ENCODE measurements at regions of chr3 and their contacts with region 1.

Region 1: DNA sequence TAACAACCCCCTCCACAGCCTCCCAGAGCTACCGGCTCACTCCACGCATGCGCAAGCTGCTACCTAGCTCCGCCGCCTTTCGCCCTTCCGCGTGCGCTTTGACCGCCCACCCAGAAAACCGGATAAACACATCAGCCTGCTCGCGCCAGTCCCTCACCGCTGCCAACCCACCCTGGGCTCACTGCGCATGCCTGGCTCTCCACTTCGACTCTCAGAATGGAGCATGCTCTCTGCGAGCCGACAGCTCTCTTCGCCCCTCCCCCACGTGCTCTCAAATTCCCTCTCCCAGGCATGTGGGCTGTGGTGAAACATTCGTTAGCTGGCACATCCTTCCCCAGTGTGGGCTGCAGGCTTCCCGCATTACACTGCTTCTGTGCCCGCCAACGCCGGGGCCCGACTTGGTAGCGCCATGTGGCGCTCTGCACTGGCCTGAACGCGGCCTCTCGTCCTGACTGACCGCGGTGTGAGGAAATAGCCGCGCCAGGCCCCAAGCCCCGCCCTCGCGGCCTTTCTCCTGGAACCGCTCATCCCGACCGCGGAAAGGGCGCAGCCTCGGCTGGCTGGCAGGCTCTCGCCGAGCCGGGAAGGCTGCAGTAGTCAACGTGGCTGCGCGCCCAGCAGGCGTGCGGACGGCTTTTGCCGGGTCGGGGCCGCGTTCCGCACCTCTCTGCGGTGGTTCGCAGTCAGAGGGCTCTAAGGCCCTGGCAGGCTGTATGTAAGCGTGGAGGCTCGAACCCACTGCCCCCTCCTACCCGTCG is 445 bp upstream of the MSL2 start:
- DNase-seq: peak; percentile 98
- H3K4me3 ChIP-seq: peak overlapping the region; percentile 93 to 94
- H3K27ac ChIP-seq: peak overlapping the region; percentile 99 to 100
- H3K4me1 ChIP-seq: peaks cover 16% of the 10 kb centered on the region
- H3K27me3 ChIP-seq: no peaks in the 10 kb centered on the region
- CTCF ChIP-seq: no peak
- POLR2A ChIP-seq: no peak

Region 2: GRCh38 chr3:136055491-136055890 is 141.1 kb before region 1 on chr3:
- intact Hi-C with region 1: no loop called
- DNase-seq: no peak
- H3K4me3 ChIP-seq: no peak overlapping the region
- H3K27ac ChIP-seq: no peak overlapping the region
- H3K4me1 ChIP-seq: no peaks in the 10 kb centered on the region
- H3K27me3 ChIP-seq: no peaks in the 10 kb centered on the region
- CTCF ChIP-seq: no peak
- POLR2A ChIP-seq: no peak

Region 3: GRCh38 chr3:136075218-136075808 is 121.3 kb before region 1 on chr3:
- intact Hi-C with region 1: loop called (anchors 10 kb)
- DNase-seq: peak; percentile 86
- H3K4me3 ChIP-seq: no peak overlapping the region
- H3K27ac ChIP-seq: no peak overlapping the region
- H3K4me1 ChIP-seq: peaks cover 16% of the 10 kb centered on the region
- H3K27me3 ChIP-seq: no peaks in the 10 kb centered on the region
- CTCF ChIP-seq: peak; percentile 92 to 97 (median 96)
- POLR2A ChIP-seq: no peak

Region 4: DNA sequence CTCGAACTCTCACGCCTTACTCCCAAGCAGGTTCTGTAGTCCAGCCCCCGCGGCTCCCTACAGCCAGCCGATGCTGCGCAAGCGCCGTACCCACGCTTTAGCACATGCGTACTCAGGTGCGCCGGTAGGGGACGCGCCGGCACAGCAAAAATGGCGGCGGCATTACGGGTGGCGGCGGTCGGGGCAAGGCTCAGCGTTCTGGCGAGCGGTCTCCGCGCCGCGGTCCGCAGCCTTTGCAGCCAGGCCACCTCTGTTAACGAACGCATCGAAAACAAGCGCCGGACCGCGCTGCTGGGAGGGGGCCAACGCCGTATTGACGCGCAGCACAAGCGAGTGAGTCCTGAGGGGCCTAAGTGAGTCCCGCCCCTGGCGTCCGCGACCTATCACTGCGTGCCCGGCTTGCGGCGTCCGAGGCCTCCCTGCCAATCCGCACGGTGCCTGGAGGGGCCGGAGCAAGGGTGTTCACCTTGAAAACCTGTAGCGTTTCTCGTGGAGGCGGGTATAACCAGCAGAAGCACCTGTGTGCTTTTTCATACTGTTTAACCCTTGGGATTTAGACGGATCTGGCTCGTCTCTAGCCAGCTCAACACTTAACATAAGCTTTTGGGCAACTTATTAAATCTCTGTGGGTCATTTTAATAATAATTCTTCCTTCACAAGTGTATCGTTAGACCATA is 53.8 kb after region 1 on chr3 and contains the start of gene PCCB:
- intact Hi-C with region 1: loop called (anchors 5 kb)
- DNase-seq: peak; percentile 95
- H3K4me3 ChIP-seq: peak within 1 kb of the TSS; percentile 69 to 73
- H3K27ac ChIP-seq: peak within 1 kb of the TSS; percentile 91 to 95
- H3K4me1 ChIP-seq: peaks cover 17% of the 10 kb centered on the region
- H3K27me3 ChIP-seq: no peaks in the 10 kb centered on the region
- CTCF ChIP-seq: peak; percentile 11 to 92 (median 89)
- POLR2A ChIP-seq: no peak
- total RNA-seq, gene PCCB: 81.7 to 91.8 TPM

Measured in testis (tissue), 5 donors.